Activated T-helper 1 cell treated with anti-CD3 and anti-CD28 coated beads, Interleukin-12 subunit alpha, Interleukin-12 subunit beta, Interleukin-2, Interleukin-4 antibody, amounts not matched to agents 30 ng/mL and 10 ng/mL and 1 ng/mL, durations not matched to agents 14 hours and 24 hours and 36 hours (primary cell): ENCODE measurements at regions of chr2 and their contacts with region 1.

Region 1: GRCh38 chr2:4175343-4175742 is 472.0 kb downstream of the DCDC2C start:
- DNase-seq: no peak
- H3K4me3 Mint-ChIP-seq: no peak overlapping the region
- H3K27ac Mint-ChIP-seq: no peak overlapping the region
- H3K4me1 Mint-ChIP-seq: no peaks in the 10 kb centered on the region
- H3K27me3 Mint-ChIP-seq: no peaks in the 10 kb centered on the region

Region 2: DNA sequence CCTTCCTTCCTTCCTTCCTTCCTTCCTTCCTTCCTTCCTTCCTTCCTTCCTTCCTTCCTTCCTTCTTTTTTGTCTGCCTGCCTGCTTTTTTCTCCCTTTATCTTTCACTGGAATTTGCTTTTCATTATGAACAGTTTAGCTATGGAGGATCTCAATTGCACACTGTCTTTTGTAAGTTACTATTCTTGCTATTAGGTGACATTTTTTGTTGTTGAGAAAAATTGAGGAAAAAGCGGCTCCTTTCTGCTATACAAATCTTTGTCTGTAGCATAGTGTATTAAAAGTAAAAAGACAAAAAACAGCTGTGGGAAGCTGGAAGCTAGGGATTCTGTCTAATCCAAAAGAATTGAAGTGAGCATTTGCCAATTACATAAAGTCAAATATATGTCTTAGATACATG is 23.3 kb before region 1 on chr2:
- intact Hi-C with region 1: loop called (anchors 1 kb)
- DNase-seq: no peak
- H3K4me3 Mint-ChIP-seq: no peak overlapping the region
- H3K27ac Mint-ChIP-seq: no peak overlapping the region
- H3K4me1 Mint-ChIP-seq: no peaks in the 10 kb centered on the region
- H3K27me3 Mint-ChIP-seq: no peaks in the 10 kb centered on the region

Region 3: DNA sequence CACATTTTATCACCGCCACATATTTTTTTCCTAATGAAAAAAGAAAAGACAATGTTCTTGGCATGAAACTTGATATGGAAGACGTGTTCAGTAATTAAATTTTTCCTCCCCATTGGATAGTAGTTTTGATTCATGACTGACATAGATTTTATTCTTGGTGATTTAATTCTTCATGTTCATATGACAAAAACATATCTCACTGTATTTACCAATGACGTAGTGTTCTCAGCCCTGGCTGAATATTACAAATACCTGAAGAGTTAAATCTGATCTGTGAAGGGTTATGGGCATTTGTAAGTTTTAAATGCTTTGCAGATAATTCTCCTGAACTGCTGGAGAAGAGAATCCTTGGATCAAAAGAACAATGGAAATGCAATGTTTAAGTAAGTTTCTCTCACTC is 11.1 kb before region 1 on chr2:
- intact Hi-C with region 1: loop called (anchors 1 kb)
- DNase-seq: no peak
- H3K4me3 Mint-ChIP-seq: no peak overlapping the region
- H3K27ac Mint-ChIP-seq: no peak overlapping the region
- H3K4me1 Mint-ChIP-seq: no peaks in the 10 kb centered on the region
- H3K27me3 Mint-ChIP-seq: no peaks in the 10 kb centered on the region

Region 4: DNA sequence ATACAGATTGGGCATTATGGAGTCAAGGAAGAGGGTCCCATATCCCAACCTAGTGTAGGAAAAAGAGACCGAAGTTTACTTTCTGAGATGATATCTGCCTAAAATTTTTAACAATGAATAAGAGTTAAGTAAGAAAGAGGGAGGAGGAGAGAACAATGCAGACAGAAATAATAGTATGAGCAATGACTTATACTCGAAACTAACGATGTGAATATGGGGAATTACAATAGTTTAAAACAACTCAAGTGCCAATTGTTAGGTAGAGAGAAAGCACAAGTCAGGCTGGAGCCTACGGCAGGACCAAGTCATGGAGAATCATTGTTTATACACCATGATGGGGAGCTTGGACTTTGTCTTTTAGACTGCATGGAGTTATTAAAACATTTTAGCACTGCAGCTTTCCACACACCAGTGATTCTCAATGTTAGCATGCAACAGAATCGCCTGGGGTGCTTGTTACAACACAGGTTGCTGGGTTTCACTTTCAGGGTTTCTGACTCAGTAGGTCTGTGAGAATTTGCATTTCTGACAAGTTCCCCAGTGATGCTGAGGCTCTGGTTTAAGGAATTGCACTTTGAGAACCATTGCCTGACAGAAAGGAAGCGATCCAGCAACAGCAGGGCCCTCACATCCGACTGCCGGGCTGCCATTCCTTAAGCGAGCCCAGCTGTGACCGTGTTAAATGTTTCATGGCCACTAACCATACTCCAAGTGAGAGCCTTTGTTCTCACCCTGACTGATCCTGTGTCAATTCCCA is 39.3 kb after region 1 on chr2:
- intact Hi-C with region 1: no loop called
- DNase-seq: no peak
- H3K4me3 Mint-ChIP-seq: no peak overlapping the region
- H3K27ac Mint-ChIP-seq: no peak overlapping the region
- H3K4me1 Mint-ChIP-seq: no peaks in the 10 kb centered on the region
- H3K27me3 Mint-ChIP-seq: no peaks in the 10 kb centered on the region